Posterior vena cava (tissue), 2 donors: ENCODE measurements at regions of chr15 and their contacts with region 1.

Region 1: GRCh38 chr15:65318870-65319356 is 14.4 kb downstream of the RNU5B-1 start:
- DNase-seq: peak; percentile 89

Region 2: GRCh38 chr15:65384895-65385858 is 66.3 kb after region 1 on chr15:
- intact Hi-C with region 1: loop called (anchors 2 to 5 kb)
- DNase-seq: peak; percentile 95

Region 3: DNA sequence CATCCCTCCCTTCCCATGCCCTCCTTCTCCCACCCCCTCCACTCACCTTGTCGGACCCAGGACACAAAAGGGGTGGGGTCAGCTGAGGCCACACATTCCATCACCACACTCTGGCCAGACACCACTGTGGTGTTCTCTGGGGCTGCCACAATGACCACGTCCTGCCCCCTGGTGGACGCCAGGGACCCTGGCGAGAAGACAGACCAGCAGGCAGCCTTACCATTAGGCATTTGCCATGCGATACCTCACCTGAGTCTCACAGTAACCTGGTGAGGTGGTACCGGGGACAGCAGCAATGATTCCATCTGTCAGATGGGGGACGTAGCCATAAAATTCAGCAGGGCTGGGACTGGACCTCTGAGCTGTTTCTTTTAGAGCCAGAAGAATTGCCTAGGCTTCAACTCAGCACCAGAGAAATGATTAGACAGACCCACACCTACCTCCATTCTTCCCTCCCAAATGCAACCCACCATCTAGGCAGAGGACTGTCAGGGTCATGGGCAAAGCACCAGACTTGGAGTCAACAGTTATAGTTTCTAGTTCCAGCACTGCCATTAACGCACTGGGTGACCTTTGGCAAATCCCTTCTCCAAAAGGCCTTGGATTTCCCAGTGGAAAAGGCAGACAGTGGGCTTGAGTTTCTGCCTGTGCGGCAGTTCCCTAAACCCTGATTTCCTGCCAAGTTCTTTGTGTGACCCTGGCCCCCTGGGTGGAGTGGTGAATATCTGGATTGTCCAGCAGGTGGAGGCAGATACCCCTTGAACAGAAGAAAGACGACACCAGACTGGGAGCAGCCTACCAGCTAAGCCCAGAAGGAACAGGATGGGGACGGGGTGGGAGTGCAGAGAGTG is 82.1 kb after region 1 on chr15:
- intact Hi-C with region 1: loop called in 1 of 2 experiments (anchors 5 kb)
- DNase-seq: no peak